CD8-positive, alpha-beta T cell (primary cell): ENCODE measurements at regions of chr7 and their contacts with region 1.

Region 1: GRCh38 chr7:98434095-98434494 is 33.2 kb upstream of the BAIAP2L1 start:
- DNase-seq: no peak
- ATAC-seq: no peak
- H3K4me3 ChIP-seq: no peak overlapping the region
- H3K4me3 Mint-ChIP-seq: no peak overlapping the region
- H3K27ac ChIP-seq: no peak overlapping the region
- H3K27ac Mint-ChIP-seq: no peak overlapping the region
- H3K4me1 ChIP-seq: no peaks in the 10 kb centered on the region
- H3K4me1 Mint-ChIP-seq: peaks cover 5% of the 10 kb centered on the region
- H3K27me3 ChIP-seq: no peaks in the 10 kb centered on the region
- H3K27me3 Mint-ChIP-seq: peaks cover 4% of the 10 kb centered on the region
- CTCF ChIP-seq: no peak

Region 2: GRCh38 chr7:98394377-98394836 is 39.7 kb before region 1 on chr7:
- CTCF ChIA-PET with region 1: no interaction called
- POLR2A ChIA-PET with region 1: no interaction called
- intact Hi-C with region 1: no loop called
- DNase-seq: no peak
- ATAC-seq: no peak
- H3K4me3 ChIP-seq: no peak overlapping the region
- H3K4me3 Mint-ChIP-seq: no peak overlapping the region
- H3K27ac ChIP-seq: no peak overlapping the region
- H3K27ac Mint-ChIP-seq: no peak overlapping the region
- H3K4me1 ChIP-seq: no peaks in the 10 kb centered on the region
- H3K4me1 Mint-ChIP-seq: peaks cover 1% of the 10 kb centered on the region
- H3K27me3 ChIP-seq: no peaks in the 10 kb centered on the region
- H3K27me3 Mint-ChIP-seq: peaks cover 18% of the 10 kb centered on the region
- CTCF ChIP-seq: no peak

Region 3: GRCh38 chr7:98841179-98841997 is 407.3 kb after region 1 on chr7:
- CTCF ChIA-PET with region 1: interaction called, 123 read pairs
- POLR2A ChIA-PET with region 1: no interaction called
- intact Hi-C with region 1: loop called (anchors 1 kb)
- DNase-seq: peak; percentile 56 to 83 (median 69)
- ATAC-seq: peak; percentile 71
- H3K4me3 ChIP-seq: no peak overlapping the region
- H3K4me3 Mint-ChIP-seq: no peak overlapping the region
- H3K27ac ChIP-seq: no peak overlapping the region
- H3K27ac Mint-ChIP-seq: no peak overlapping the region
- H3K4me1 ChIP-seq: no peaks in the 10 kb centered on the region
- H3K4me1 Mint-ChIP-seq: peaks cover 2% of the 10 kb centered on the region
- H3K27me3 ChIP-seq: no peaks in the 10 kb centered on the region
- H3K27me3 Mint-ChIP-seq: peaks cover 13% of the 10 kb centered on the region
- CTCF ChIP-seq: peak; percentile 85